ENCODE measurements at regions of chr13 and their contacts with region 1.

Region 1: GRCh38 chr13:52652196-52652979 is at the start of gene SUGT1:
- DNase-seq: peak; percentile 94
- H3K4me3 Mint-ChIP-seq: no peak within 1 kb of the TSS
- H3K27ac Mint-ChIP-seq: no peak within 1 kb of the TSS
- H3K4me1 Mint-ChIP-seq: peaks cover 14% of the 10 kb centered on the region
- H3K27me3 Mint-ChIP-seq: no peaks in the 10 kb centered on the region
- total RNA-seq, gene SUGT1: 66.5 and 72.3 TPM in 2 replicates

Region 2: DNA sequence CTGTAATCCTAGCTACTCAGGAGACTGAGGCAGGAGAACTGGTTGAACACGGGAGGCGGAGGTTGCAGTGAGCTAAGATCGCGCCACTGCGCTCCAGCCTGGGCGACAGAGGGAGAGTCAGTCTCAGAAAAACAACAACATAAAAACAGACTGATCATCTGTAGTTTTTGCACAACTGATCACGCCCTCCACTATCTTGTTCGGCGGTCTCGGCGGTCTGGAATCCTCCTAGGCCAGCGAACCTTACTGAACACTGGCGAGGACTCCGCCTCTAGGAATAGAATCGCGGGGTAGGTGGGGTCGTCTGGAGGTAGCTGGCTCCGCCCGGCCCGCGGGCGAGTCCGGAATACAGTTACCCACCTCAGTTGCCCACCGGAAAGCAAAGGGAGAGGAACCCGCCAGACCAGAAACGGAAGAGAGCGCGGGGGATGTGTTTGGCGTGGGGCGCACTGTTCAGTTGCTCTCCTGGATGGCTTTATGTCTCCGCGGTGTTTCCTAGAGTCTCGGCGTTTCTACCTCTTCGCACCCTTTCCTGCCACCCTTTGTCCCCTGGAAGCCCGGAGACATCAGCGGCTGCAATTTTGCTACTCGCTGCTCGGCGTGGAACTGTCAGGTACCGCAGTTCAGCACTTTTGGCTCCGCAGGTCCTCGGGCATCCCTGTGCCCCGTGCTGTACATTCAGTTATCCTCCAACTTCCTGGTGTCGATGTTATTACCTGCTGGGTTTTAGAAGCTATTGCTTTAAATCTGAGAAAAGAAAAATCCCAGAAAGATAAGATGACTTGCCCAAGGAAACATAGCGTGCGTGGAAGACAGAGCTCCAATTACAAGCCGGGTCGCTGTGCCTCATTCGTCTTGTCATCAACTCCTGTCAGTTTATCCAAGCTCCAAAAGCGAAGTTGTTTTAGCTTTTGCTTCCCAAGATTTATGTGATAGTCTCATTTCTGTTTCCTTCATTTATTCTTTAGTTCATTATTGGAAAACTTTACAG is 35.0 kb before region 1 on chr13:
- intact Hi-C with region 1: loop called (anchors 1 kb)
- DNase-seq: peak; percentile 80
- H3K4me3 Mint-ChIP-seq: peak overlapping the region; percentile 99
- H3K27ac Mint-ChIP-seq: peak overlapping the region; percentile 89
- H3K4me1 Mint-ChIP-seq: peaks cover 16% of the 10 kb centered on the region
- H3K27me3 Mint-ChIP-seq: peaks cover 6% of the 10 kb centered on the region

Region 3: GRCh38 chr13:52695856-52696255 is 43.5 kb after region 1 on chr13:
- intact Hi-C with region 1: loop called (anchors 2 kb)
- DNase-seq: peak; percentile 12
- H3K4me3 Mint-ChIP-seq: no peak overlapping the region
- H3K27ac Mint-ChIP-seq: peak overlapping the region; percentile 50
- H3K4me1 Mint-ChIP-seq: peaks cover 11% of the 10 kb centered on the region
- H3K27me3 Mint-ChIP-seq: no peaks in the 10 kb centered on the region

Region 4: GRCh38 chr13:52786747-52787146 is 134.4 kb after region 1 on chr13:
- intact Hi-C with region 1: no loop called
- DNase-seq: no peak
- H3K4me3 Mint-ChIP-seq: no peak overlapping the region
- H3K27ac Mint-ChIP-seq: no peak overlapping the region
- H3K4me1 Mint-ChIP-seq: no peaks in the 10 kb centered on the region
- H3K27me3 Mint-ChIP-seq: no peaks in the 10 kb centered on the region

Measured in activated T-helper 2 cell treated with anti-CD3 and anti-CD28 coated beads, Interferon-gamma antibody, Interleukin-2, Interleukin-4, amounts not matched to agents 10 μg/mL and 5 μg/mL and 100 μg/mL, durations not matched to agents 14 hours and 24 hours and 36 hours (primary cell).